Activated B cell treated with CpG ODN at 0.5 μM for 24 hours (primary cell): ENCODE measurements at regions of chr16 and their contacts with region 1.

Region 1: DNA sequence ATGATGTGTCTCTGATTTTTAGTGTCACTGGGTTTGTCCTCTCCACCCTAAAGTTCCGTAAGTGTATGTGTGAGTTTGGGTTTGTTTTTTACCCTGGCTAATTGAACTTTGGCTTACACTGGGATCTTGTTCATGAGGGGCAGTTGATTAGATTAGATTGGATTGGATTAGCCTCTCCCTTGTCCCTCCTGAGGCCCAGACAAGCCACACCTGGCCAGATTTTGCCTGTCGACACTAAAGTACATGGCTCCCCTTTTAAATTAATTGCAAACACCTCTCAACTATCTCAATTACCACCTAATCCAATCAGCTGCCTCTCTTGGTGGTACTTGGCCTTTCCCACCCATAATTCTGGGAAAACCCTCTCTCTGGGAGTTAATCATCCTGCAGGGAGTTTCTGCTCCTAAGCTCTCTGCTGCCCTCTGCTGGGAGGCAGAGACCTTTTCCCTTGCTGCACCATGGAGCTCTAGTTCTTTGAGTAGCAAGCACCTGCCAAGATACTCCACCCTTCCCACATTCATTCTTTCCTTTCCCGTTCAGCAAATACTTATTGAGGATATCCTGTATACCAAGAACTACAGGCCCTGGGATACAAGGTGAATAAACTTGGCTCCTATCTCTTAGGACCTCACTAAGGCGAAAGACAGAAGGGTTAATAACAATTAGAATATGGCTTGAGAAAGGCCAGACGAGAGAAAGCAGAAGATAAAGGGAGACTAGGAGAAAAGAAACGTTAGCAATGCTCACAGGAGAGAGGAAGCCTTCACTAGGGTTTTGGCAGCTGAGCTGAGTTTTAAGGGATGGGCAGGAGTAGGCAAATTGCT is 60.0 kb upstream of the MPHOSPH6 start:
- DNase-seq: peak; percentile 17
- ATAC-seq: no peak
- H3K4me3 Mint-ChIP-seq: no peak overlapping the region
- H3K27ac Mint-ChIP-seq: no peak overlapping the region
- H3K4me1 Mint-ChIP-seq: no peaks in the 10 kb centered on the region
- H3K27me3 Mint-ChIP-seq: peaks cover 18% of the 10 kb centered on the region
- CTCF ChIP-seq: peak; percentile 69

Region 2: GRCh38 chr16:81940781-81941560 is 289.0 kb before region 1 on chr16:
- CTCF ChIA-PET with region 1: interaction called, 4 read pairs
- POLR2A ChIA-PET with region 1: no interaction called
- intact Hi-C with region 1: loop called (anchors 2 kb)
- DNase-seq: no peak
- ATAC-seq: no peak
- H3K4me3 Mint-ChIP-seq: no peak overlapping the region
- H3K27ac Mint-ChIP-seq: no peak overlapping the region
- H3K4me1 Mint-ChIP-seq: no peaks in the 10 kb centered on the region
- H3K27me3 Mint-ChIP-seq: no peaks in the 10 kb centered on the region
- CTCF ChIP-seq: no peak

Region 3: DNA sequence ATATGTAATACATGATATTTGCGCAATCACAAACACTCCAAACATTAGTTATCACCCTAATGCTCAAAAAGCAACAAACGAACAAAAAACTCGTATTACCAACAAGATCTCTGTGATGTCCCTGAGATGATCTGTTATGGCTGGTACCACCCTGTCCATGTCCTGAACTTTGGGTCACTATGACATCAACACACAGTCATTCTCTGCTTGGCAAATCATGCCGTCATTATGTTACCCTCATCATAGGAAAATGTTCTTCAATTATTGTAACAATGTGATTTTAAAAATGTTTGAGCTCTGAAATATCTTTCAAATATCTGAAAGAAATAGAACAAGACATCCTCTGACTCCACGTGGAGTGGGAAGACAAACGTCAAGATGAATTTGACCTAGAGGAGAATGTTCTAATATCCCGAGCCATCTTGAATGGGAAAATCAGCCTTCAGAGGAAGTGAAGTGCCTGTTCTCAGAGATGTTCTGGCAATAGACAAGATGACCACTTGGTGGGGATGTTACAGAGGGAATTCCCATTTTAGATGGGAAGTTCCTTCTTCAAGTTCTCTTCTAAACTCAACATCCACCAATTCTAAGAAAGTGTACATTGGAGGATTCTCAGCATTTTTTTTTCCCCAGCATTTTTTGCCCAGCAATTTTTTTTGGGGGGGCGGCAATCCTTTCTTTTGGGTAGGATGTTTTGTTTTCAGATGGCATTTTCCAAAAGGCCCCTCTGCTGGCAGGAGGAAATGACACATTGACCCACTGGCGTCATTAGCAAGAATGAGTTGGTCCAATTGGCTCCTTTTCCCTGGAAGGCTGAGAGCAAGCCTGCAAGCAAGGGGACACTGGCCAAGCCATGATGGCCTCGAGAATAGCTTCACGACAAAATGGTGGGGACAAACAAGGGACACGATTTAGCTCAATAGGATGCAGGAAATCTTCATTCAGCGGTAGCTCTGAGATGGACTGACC is 198.6 kb before region 1 on chr16:
- CTCF ChIA-PET with region 1: no interaction called
- POLR2A ChIA-PET with region 1: no interaction called
- intact Hi-C with region 1: loop called (anchors 10 kb)
- DNase-seq: no peak
- ATAC-seq: no peak
- H3K4me3 Mint-ChIP-seq: no peak overlapping the region
- H3K27ac Mint-ChIP-seq: no peak overlapping the region
- H3K4me1 Mint-ChIP-seq: no peaks in the 10 kb centered on the region
- H3K27me3 Mint-ChIP-seq: peaks cover 20% of the 10 kb centered on the region
- CTCF ChIP-seq: no peak